Gastrocnemius medialis (tissue), 4 donors: ENCODE measurements at regions of chr15 and their contacts with region 1.

Region 1: DNA sequence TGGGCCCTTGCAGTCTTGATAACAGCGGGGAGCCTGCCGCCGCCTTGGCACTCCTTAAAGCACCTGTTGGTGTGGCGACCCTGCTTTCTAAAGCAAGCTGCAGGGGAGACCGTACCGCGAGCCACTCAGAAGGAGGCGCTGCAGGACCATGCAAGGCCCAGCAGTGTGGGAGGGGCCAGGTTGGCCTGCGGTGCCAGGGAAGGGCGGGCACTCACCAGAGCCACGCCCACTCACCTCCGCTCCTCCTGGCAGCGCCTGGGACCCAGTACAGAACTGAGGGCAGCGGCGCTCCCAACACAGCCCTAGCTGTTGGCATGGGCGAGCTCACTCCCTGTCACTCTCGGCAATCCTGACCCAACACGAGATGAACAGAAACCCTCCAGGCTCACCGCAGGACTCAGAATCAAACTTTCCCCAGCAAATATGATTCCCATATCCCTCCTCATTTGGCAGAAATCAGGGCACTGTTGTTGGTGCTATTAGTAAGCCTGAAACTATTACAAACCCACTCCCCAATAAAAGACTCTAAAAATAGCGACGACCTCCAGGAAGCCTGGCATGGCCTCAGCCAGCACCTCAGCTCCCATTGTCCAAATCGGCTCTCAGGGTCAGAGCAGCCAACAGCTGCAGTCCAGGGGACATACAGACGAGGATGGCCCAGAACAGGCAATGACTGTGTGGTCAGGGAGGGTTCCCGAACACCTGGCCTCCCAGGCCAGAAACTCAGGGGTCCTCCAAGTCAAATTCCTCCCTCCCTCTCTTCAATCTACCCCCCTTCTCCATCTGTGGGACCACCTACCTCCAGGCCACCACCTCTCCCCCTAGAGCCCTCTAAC is 77.2 kb downstream of the TBC1D2B start:
- DNase-seq: peak; percentile 60 to 83
- ATAC-seq: peak; percentile 3 to 15
- H3K4me3 ChIP-seq: no peak overlapping the region
- H3K27ac ChIP-seq: no peak overlapping the region
- H3K4me1 ChIP-seq: peaks cover 38 to 42% of the 10 kb centered on the region in 2 donors
- H3K27me3 ChIP-seq: no peaks in the 10 kb centered on the region
- CTCF ChIP-seq: peak; percentile 69 to 89 (median 77)
- POLR2A ChIP-seq: no peak

Region 2: DNA sequence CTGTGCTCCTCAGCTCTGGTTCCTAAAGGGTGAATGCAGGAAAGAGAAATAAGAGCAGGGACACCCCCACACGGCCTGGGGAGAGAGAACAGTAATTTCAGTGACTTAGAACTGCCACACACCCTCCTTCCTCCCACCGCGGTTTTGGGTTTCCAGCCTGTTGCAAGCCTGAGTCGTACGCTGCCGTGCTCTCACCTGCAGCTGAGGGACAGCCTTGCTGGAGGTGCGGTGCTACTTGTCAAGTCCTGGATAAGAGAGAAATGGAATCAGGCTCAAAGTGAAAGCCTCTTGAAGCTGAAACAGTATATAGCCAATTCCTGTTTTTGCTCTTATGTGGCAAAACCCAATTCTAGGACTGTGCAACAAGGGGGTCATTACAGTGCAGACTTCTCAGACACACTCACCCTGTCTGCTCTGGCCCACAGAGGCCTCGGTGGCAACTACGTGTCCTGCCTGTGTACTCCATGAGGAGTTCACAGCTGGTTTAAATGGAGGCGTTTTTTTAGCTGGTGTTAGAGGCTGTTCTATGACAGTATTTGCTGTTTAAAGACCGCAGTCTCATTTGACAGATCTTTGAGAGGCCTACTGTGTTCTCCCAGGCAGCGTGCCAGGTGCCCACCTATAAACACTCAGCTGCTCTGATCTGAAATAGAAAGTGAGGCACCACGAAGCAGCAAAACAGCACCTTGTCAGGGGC is 34.3 kb after region 1 on chr15:
- in situ Hi-C with region 1: no loop called
- intact Hi-C with region 1: no loop called
- DNase-seq: peak in 1 of 2 donors; percentile 44
- ATAC-seq: peak; percentile 53 to 61
- H3K4me3 ChIP-seq: no peak overlapping the region
- H3K27ac ChIP-seq: peak overlapping the region; percentile 22 to 41 (median 26)
- H3K4me1 ChIP-seq: peaks cover 31 to 33% of the 10 kb centered on the region in 2 donors
- H3K27me3 ChIP-seq: no peaks in the 10 kb centered on the region
- CTCF ChIP-seq: no peak
- POLR2A ChIP-seq: no peak

Region 3: DNA sequence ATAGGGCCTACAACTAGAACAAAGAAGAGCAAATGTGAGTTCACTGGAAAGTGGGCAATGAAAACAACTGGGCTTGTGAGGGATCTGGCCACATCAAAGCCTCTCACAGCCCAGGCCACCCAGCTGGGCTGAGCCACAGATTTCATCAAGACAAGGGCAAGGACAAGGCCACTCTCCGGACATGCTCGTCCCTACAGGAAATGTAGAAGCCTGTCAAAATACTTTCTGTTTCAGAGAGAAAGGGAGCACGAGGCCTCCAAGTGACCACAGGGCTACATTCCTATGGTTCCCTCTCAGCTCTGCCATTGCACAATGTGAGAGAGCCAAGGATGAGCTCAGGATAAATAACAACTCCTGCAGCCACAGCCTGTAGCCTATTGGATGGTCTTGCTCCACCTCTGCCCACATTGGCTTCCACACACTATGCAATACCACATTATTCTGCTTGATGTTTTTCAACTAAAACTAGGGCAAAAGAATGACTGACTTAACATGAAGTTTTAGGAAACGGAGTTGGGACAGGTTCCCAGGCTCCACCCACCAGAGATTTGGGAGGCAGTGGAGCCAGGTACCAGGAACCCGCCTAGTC is 65.1 kb after region 1 on chr15:
- in situ Hi-C with region 1: no loop called
- intact Hi-C with region 1: loop called (anchors 2 kb)
- DNase-seq: peak; percentile 75 to 88
- ATAC-seq: peak; percentile 86 to 90
- H3K4me3 ChIP-seq: no peak overlapping the region
- H3K27ac ChIP-seq: peak overlapping the region; percentile 71 to 83 (median 74)
- H3K4me1 ChIP-seq: peaks cover 76 to 92% of the 10 kb centered on the region in 2 donors
- H3K27me3 ChIP-seq: no peaks in the 10 kb centered on the region
- CTCF ChIP-seq: no peak
- POLR2A ChIP-seq: no peak

Region 4: GRCh38 chr15:78087951-78088772 is 87.9 kb after region 1 on chr15:
- in situ Hi-C with region 1: loop called in 1 of 4 experiments (anchors 10 kb)
- intact Hi-C with region 1: loop called (anchors 5 kb)
- DNase-seq: no peak
- ATAC-seq: no peak
- H3K4me3 ChIP-seq: no peak overlapping the region
- H3K27ac ChIP-seq: no peak overlapping the region
- H3K4me1 ChIP-seq: peaks cover 14% of the 10 kb centered on the region in 2 donors
- H3K27me3 ChIP-seq: no peaks in the 10 kb centered on the region
- CTCF ChIP-seq: no peak
- POLR2A ChIP-seq: no peak

Region 5: GRCh38 chr15:78204351-78205309 is 204.3 kb after region 1 on chr15:
- in situ Hi-C with region 1: no loop called
- intact Hi-C with region 1: loop called (anchors 5 kb)
- DNase-seq: peak; percentile 52 to 71
- ATAC-seq: peak; percentile 83 to 87
- H3K4me3 ChIP-seq: no peak overlapping the region
- H3K27ac ChIP-seq: peak overlapping the region; percentile 71 to 80 (median 78)
- H3K4me1 ChIP-seq: peaks cover 48 to 53% of the 10 kb centered on the region in 2 donors
- H3K27me3 ChIP-seq: no peaks in the 10 kb centered on the region
- CTCF ChIP-seq: no peak
- POLR2A ChIP-seq: no peak